Calu3 (cell line): ENCODE measurements at regions of chr3 and their contacts with region 1.

Region 1: GRCh38 chr3:147616998-147617619 is 207.9 kb downstream of the ZIC1 start:
- DNase-seq: no peak
- H3K4me3 Mint-ChIP-seq: no peak overlapping the region
- H3K27ac Mint-ChIP-seq: no peak overlapping the region
- H3K4me1 Mint-ChIP-seq: no peaks in the 10 kb centered on the region
- H3K27me3 Mint-ChIP-seq: no peaks in the 10 kb centered on the region
- CTCF ChIP-seq: peak; percentile 51

Region 2: GRCh38 chr3:147119989-147120388 is 497.1 kb before region 1 on chr3:
- CTCF ChIA-PET with region 1: interaction called, 3 read pairs
- intact Hi-C with region 1: loop called (anchors 1 kb)
- DNase-seq: no peak
- H3K4me3 Mint-ChIP-seq: no peak overlapping the region
- H3K27ac Mint-ChIP-seq: no peak overlapping the region
- H3K4me1 Mint-ChIP-seq: no peaks in the 10 kb centered on the region
- H3K27me3 Mint-ChIP-seq: no peaks in the 10 kb centered on the region
- CTCF ChIP-seq: peak; percentile 47

Region 3: DNA sequence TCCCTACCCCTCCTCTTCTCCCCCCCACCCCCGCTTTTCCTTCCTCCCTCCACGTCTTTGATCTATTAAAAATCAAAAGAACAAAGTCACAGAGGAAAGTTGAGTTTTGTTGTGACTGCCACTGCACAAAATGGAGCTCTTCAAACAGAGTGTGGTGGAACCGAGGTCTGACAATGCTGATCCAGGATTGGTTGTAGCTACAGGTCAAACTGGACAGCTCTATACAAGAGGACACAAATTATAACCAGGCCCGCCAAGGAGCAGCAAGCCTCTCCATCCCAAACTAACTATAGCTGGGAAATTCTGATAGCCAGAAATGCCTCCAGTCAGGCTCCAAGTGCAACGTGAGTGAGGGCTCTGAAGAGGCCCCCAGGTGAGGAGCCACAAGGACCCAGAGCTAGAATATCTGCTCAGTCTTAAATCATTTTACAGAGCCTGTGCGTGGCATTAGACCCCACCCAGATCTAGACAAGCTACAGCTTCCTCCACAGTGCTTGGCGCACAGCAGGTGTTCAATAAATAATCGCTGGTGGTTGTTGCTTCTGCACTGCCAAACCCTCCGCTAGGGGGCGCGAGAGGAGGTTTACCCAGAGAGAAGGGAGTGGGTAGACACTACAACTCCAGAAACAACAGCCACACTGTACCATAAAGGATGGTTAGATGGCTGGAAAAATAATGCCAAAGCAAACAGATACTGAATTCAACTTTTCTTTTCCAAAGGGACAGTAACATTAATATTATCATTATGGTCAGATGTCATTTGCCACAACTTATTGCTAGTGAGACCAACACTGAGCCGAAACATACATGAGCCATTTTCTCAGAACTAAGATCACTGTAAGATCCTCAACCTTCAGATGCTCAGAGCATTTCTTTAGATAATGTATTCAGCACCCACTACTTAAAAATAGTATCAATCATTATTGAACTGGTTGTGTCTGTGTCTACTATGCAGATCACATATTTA is 255.4 kb before region 1 on chr3:
- CTCF ChIA-PET with region 1: no interaction called
- intact Hi-C with region 1: loop called (anchors 10 kb)
- DNase-seq: peak; percentile 78
- H3K4me3 Mint-ChIP-seq: peak overlapping the region; percentile 3
- H3K27ac Mint-ChIP-seq: no peak overlapping the region
- H3K4me1 Mint-ChIP-seq: no peaks in the 10 kb centered on the region
- H3K27me3 Mint-ChIP-seq: no peaks in the 10 kb centered on the region
- CTCF ChIP-seq: peak; percentile 85

Region 4: DNA sequence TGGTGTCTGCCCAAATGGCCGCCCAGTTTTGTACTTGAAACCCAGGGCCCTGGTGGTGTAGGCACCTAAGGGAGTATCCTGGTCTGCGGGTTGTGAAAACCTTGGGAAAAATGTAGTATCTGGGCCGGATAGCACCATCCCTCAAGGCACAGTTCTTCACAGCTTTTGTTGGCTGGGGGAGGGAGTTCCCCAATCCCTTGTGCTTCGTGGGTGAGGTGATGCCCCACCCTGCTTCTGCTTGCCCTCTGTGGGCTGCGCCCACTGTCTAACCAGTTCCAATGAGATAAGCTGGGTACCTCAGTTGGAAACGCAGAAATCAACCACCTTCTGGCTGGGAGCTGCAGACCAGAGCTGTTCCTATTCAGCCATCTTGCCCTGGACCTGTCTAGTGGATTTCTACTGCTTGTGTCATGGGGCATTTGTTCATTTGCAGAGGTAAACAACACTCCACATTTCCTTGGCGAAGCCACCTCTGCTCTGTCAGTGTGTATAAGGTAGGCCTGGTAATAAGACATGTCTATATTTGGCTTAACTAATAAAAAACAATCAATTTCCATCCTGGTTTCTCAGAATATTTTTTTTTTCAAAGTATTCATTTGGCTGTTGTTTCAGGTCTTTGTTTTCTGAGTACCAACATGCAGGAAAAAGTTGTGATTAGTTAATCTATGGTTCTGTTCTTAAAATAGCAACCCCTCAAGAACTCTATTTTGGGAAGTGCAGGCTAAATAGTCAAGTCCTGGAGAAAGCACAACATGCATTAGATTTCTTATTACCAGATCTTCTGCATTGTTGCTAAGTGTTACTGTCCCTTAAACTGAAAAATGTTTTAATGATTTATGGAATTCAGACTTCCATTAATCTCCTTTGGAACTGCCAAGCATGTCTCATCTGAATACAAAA is 96.4 kb after region 1 on chr3:
- CTCF ChIA-PET with region 1: no interaction called
- intact Hi-C with region 1: no loop called
- DNase-seq: no peak
- H3K4me3 Mint-ChIP-seq: no peak overlapping the region
- H3K27ac Mint-ChIP-seq: no peak overlapping the region
- H3K4me1 Mint-ChIP-seq: peaks cover 36% of the 10 kb centered on the region
- H3K27me3 Mint-ChIP-seq: no peaks in the 10 kb centered on the region
- CTCF ChIP-seq: no peak

Region 5: DNA sequence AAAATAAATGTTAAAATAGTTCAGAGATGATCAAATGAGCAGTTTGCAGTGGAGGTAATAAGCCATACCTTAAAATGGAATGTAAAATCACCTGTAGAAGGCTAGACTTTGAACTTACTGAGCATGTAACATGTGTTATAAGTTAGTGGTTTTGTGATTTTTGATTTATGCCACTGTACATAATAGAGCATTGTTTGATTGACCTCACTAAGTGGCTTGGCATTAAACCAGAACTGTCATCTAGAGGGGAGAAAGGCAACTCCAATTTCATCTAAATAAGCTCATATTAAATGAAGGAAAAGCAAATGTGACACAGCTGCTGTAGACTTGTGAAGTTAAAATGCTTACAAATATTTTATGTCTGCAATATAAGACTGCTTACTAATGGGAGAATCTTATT is 180.0 kb after region 1 on chr3:
- CTCF ChIA-PET with region 1: no interaction called
- intact Hi-C with region 1: loop called (anchors 5 kb)
- DNase-seq: peak; percentile 37
- H3K4me3 Mint-ChIP-seq: no peak overlapping the region
- H3K27ac Mint-ChIP-seq: peak overlapping the region; percentile 27
- H3K4me1 Mint-ChIP-seq: peaks cover 37% of the 10 kb centered on the region
- H3K27me3 Mint-ChIP-seq: no peaks in the 10 kb centered on the region
- CTCF ChIP-seq: no peak